ENCODE measurements at regions of chr2 and their contacts with region 1.

Region 1: GRCh38 chr2:198296665-198297308 is 492.4 kb downstream of the PLCL1 start:
- DNase-seq: peak; percentile 26 to 51
- ATAC-seq: peak; percentile 87 to 96
- H3K4me3 ChIP-seq: no peak overlapping the region
- H3K27ac ChIP-seq: no peak overlapping the region
- H3K4me1 ChIP-seq: no peaks in the 10 kb centered on the region
- CTCF ChIP-seq: peak; percentile 85
- EP300 ChIP-seq: no peak
- POLR2A ChIP-seq: no peak
- RAD21 ChIP-seq: peak; percentile 78 to 80

Region 2: GRCh38 chr2:197801033-197801432 is 495.8 kb before region 1 on chr2:
- CTCF ChIA-PET with region 1: interaction called, 11 read pairs
- POLR2A ChIA-PET with region 1: no interaction called
- DNase-seq: no peak
- ATAC-seq: no peak
- H3K4me3 ChIP-seq: no peak overlapping the region
- H3K27ac ChIP-seq: no peak overlapping the region
- H3K4me1 ChIP-seq: 0 out of 3 replicates have a peak, but pooled peaks cover 8% of the 10 kb centered on the region
- CTCF ChIP-seq: no peak
- EP300 ChIP-seq: no peak
- POLR2A ChIP-seq: no peak
- RAD21 ChIP-seq: no peak

Region 3: DNA sequence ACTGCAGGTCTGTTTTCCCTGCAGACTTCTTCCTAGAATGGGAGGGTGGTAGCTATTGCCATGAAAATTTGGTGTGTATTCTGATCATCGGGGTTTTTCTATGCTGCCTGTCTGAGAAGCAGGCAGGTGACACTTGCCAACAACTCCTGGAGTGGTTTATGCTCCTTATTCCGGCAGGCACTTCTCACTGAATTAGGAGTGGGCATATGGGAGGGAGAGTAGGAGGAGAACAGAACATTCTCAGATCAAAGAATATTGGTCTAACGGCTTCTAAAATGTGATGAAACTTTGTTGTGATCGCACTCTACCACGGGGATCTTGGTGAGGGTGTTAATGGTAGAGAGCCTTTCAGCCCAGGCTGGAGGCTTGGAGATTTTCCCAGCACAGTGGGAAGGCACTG is 11.6 kb before region 1 on chr2:
- CTCF ChIA-PET with region 1: interaction called, 13 read pairs
- POLR2A ChIA-PET with region 1: no interaction called
- DNase-seq: no peak
- ATAC-seq: 0 out of 6 replicates have a peak, but pooled peaks of 1 of the 2 experiments have one; percentile 19
- H3K4me3 ChIP-seq: no peak overlapping the region
- H3K27ac ChIP-seq: no peak overlapping the region
- H3K4me1 ChIP-seq: no peaks in the 10 kb centered on the region
- CTCF ChIP-seq: no peak
- EP300 ChIP-seq: no peak
- POLR2A ChIP-seq: no peak
- RAD21 ChIP-seq: no peak

Region 4: DNA sequence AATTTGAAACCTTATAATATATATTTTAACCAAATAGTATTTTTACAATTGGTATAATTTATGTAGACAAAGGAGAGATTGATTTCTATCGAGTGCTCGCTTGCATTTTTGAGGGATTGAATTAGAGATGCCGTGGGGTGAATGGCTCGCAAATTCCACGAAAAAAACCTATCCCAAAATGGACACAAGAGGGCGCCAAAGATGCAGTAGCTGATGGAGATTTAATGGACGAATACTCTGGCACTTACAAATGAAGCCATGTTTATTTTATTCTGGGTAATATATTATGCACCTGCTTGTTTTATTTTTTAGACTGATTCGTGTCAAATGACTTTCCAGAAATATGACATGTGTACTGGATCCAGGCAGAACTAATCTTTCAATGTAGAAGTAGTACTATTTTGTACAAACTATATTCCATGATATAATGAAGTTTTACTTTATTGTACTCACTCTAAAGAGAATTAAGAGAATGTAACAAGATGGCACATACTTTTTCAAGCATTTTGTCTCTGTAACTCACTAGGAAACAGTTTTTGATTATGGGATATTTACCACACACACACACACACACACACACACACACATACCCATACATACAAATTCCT is 13.0 kb after region 1 on chr2:
- CTCF ChIA-PET with region 1: interaction called, 17 read pairs
- POLR2A ChIA-PET with region 1: no interaction called
- DNase-seq: peak; percentile 37
- ATAC-seq: peak in 1 of 2 experiments; percentile 77; a peak in 3 of 6 replicates
- H3K4me3 ChIP-seq: no peak overlapping the region
- H3K27ac ChIP-seq: no peak overlapping the region
- H3K4me1 ChIP-seq: no peaks in the 10 kb centered on the region
- CTCF ChIP-seq: peak; percentile 82
- EP300 ChIP-seq: no peak
- POLR2A ChIP-seq: no peak
- RAD21 ChIP-seq: peak; percentile 58 to 62; a peak in 4 of 5 replicates

Region 5: DNA sequence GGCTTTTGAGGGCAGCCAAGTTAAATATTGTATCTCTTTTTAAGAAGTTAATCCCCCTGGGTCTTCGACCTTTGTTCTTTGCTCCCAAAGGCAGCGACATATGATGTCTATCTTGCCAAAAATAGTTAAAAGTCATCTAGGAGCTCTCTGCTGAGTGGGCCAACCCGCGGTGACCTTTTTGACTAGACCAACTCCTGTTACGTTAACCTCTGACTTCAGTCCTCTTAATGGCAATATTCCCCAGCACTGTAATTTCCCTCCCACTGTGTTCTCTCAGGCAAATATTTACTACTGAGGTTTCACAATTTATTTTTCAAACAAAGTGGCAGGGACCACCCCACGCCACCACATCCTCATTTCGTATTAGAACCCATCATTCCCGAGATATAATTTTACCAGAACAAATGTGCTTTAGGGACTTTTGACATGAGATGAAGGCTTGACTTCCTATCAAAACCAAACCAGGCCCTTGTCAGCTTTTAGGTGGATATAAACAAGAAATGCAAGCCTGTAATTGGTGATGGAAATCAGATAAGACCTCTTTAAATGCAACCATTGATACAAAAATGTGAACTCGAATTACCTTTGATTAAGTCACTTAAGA is 396.2 kb after region 1 on chr2:
- CTCF ChIA-PET with region 1: no interaction called
- POLR2A ChIA-PET with region 1: no interaction called
- DNase-seq: no peak
- ATAC-seq: no peak
- H3K4me3 ChIP-seq: no peak overlapping the region
- H3K27ac ChIP-seq: no peak overlapping the region
- H3K4me1 ChIP-seq: no peaks in the 10 kb centered on the region
- CTCF ChIP-seq: no peak
- EP300 ChIP-seq: no peak
- POLR2A ChIP-seq: no peak
- RAD21 ChIP-seq: no peak